Motor neuron (in vitro differentiated cells): ENCODE measurements at regions of chr6 and their contacts with region 1.

Region 1: GRCh38 chr6:119720160-119720559 is 370.6 kb upstream of the MAN1A1 start:
- ATAC-seq: peak in 1 of 8 experiments; percentile 26
- H3K4me3 ChIP-seq: no peak overlapping the region
- H3K27ac ChIP-seq: no peak overlapping the region
- H3K4me1 ChIP-seq: no peaks in the 10 kb centered on the region

Region 2: DNA sequence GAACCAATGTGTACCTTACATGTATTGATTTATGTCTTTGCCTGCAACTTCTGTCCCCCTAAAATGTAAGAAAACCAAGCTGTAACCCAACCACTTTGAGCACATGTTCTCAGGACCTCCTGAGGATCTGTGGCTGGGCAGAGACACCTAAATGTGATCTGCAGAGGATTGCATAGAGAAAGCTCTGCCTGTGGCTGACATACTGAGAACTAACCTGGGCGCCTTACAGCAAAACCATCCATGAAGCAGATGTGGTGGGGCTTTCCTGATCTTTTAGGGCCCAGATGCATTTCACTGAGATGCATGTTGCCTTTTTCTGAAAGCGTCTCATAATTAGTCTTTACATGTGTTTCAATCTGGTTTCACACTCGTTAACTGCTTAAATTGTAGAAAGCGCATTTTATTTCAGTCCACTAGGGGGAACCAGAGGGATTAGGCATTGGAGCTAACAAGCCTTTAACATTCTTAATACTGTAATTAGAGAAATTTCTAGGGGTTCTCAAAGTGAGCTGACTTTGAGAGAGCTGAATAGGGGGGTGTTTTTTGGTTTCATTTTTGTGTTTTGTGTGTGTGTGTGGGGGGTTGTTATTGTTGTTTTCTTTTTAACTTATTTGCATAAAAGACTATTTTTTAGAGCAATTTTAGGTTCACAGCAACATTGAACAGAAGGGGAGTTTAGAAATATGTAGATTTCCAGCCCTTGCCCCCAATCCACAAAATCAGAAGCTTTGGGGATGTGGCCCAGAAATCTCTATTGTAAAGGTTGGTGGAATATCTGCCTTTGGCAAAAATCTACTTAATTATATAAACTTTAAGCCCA is 590.8 kb before region 1 on chr6:
- in situ Hi-C with region 1: loop called in 1 of 9 experiments (anchors 25 kb)
- ATAC-seq: peak; percentile 38 to 79 (median 53)
- H3K4me3 ChIP-seq: no peak overlapping the region
- H3K27ac ChIP-seq: no peak overlapping the region
- H3K4me1 ChIP-seq: peaks cover 0 to 6% of the 10 kb centered on the region in 2 donors

Region 3: GRCh38 chr6:119333707-119334295 is 386.4 kb before region 1 on chr6:
- in situ Hi-C with region 1: no loop called
- ATAC-seq: peak in 3 of 8 experiments; percentile 37 to 45 (median 42)
- H3K4me3 ChIP-seq: no peak overlapping the region
- H3K27ac ChIP-seq: no peak overlapping the region
- H3K4me1 ChIP-seq: peaks cover 0 to 9% of the 10 kb centered on the region in 2 donors